Stomach (tissue), 19 donors: ENCODE measurements at regions of chr2 and their contacts with region 1.

Region 1: GRCh38 chr2:223970343-223971128 is 13.3 kb downstream of the MRPL44 start:
- DNase-seq: peak; percentile 32 to 81
- H3K4me3 ChIP-seq: no peak overlapping the region
- H3K27ac ChIP-seq: no peak overlapping the region
- H3K4me1 ChIP-seq: peaks cover 0 to 6% (median 2%) of the 10 kb centered on the region in 4 donors
- H3K27me3 ChIP-seq: no peaks in the 10 kb centered on the region
- CTCF ChIP-seq: peak in 5 of 7 experiments; percentile 79 to 87 (median 84)
- EP300 ChIP-seq: no peak
- POLR2A ChIP-seq: no peak

Region 2: DNA sequence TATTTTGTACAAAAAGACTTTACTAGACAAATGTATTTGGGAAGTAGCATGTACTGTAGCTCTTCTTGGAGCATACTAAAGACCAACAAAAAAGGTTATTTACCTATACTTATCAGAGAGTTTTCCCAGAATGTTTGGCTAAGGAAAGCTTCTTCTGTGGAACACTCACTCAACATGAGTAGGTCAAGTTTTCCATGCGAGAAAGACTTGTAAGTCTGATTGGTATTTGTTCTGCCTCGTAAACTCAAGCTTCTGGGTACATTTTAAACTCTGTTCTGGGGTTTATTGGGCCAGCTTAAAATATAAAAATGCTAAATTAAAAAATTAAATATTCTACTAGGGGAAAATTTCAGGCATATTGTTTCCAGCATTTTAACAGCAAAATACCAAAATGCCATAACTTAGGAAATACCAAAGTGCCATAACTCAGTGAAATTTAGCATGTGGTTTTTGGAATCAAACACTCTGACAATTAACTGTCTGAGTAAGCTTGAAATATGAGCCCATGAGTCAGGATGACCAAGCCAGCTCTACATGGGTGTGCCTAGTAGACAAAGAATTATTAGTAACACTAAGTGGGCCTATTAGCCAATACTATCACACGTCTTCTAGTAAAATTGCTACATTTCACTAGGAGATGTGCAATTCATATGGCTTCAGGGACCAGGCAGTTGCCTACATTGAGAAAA is 115.8 kb after region 1 on chr2:
- intact Hi-C with region 1: no loop called
- DNase-seq: no peak
- H3K4me3 ChIP-seq: no peak overlapping the region
- H3K27ac ChIP-seq: peak overlapping the region in 1 of 5 donors; percentile 12
- H3K4me1 ChIP-seq: no peaks in the 10 kb centered on the region
- H3K27me3 ChIP-seq: no peaks in the 10 kb centered on the region
- CTCF ChIP-seq: no peak
- EP300 ChIP-seq: no peak
- POLR2A ChIP-seq: no peak

Region 3: DNA sequence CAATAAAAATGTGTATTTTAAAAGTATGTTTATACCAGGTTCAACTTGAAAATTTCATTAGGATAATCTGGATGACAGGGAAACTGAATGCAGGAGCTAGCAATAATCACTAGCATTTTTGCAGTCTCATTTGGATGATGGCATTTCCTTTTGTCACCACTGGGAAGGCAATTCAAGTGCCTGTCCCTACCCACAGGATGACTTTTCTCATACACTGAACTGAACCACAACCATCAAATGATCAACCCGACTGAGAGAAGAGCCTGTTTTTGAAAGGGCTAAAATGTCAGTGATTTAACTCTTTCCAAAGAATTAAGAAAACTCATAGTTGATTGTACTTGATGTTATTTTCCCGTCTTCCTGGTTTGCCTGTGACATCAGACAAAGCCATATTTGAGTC is 316.4 kb after region 1 on chr2:
- intact Hi-C with region 1: loop called (anchors 5 kb)
- DNase-seq: no peak
- H3K4me3 ChIP-seq: no peak overlapping the region
- H3K27ac ChIP-seq: no peak overlapping the region
- H3K4me1 ChIP-seq: peaks cover 0 to 9% (median 0%) of the 10 kb centered on the region in 4 donors
- H3K27me3 ChIP-seq: peaks cover 0 to 13% (median 0%) of the 10 kb centered on the region in 3 donors
- CTCF ChIP-seq: no peak
- EP300 ChIP-seq: no peak
- POLR2A ChIP-seq: no peak